ENCODE measurements at regions of chr11 and their contacts with region 1.

Region 1: DNA sequence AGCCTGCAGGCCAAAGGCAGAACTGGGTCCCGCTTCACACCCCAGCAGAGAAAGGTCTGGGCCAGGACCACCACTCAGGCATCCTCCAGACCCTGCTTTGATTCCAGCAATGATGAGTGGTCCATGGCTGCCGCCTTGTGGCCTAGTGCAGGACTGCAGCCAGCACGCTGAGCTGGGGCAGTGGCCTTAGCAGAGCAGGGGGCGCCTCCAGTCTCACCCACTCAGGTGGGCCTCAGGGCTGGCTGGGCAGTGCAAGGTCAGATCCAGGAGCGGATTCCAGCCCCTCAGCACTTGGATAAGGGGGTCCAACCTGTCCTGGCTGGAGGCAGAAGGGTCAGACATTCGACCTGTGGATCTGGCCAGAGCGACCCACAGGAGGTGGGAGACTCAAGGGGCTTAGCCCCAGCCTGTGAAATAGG is 9.6 kb upstream of the PDE2A start:
- DNase-seq: peak; percentile 46
- H3K4me3 Mint-ChIP-seq: no peak overlapping the region
- H3K27ac Mint-ChIP-seq: no peak overlapping the region
- H3K4me1 Mint-ChIP-seq: no peaks in the 10 kb centered on the region
- H3K27me3 Mint-ChIP-seq: peaks cover 14% of the 10 kb centered on the region
- CTCF ChIP-seq: peak; percentile 92

Region 2: GRCh38 chr11:72483412-72484186 is 200.2 kb before region 1 on chr11:
- CTCF ChIA-PET with region 1: interaction called, 12 read pairs
- POLR2A ChIA-PET with region 1: interaction called, 7 read pairs
- intact Hi-C with region 1: no loop called
- DNase-seq: peak; percentile 44
- H3K4me3 Mint-ChIP-seq: no peak overlapping the region
- H3K27ac Mint-ChIP-seq: peak overlapping the region; percentile 91
- H3K4me1 Mint-ChIP-seq: peaks cover 15% of the 10 kb centered on the region
- H3K27me3 Mint-ChIP-seq: no peaks in the 10 kb centered on the region
- CTCF ChIP-seq: no peak

Region 3: DNA sequence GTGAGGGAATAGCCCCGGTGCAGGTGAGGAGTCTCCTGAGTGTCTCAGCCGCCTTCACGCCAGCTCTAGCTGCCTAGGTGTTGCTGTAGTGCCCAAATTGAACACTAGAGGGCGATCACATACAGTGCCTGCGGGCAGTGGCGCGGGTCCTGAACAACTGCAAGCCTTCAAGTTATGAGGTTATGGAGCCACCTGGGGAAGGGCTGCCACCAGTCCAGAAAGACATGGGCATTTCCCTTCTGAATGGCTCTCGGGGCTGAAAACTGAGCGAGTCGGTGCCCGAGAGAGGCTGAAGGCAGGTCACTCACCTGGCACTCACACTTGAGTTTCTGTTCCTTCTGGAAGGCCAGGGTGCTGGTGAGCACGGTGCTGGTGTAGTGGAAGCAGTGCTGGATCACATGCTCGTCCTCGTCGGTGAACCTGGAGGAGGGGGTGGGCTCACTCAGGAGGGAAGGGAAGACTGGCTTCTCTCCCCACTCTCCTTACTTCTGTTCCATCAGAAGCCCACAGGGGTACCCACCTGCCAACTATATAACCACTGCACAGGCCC is 98.0 kb before region 1 on chr11:
- CTCF ChIA-PET with region 1: interaction called, 24 read pairs
- POLR2A ChIA-PET with region 1: interaction called, 3 read pairs
- intact Hi-C with region 1: loop called (anchors 1 kb)
- DNase-seq: peak; percentile 71
- H3K4me3 Mint-ChIP-seq: no peak overlapping the region
- H3K27ac Mint-ChIP-seq: no peak overlapping the region
- H3K4me1 Mint-ChIP-seq: peaks cover 3% of the 10 kb centered on the region
- H3K27me3 Mint-ChIP-seq: peaks cover 37% of the 10 kb centered on the region
- CTCF ChIP-seq: peak; percentile 77

Region 4: GRCh38 chr11:72700026-72700610 is 16.3 kb after region 1 on chr11:
- CTCF ChIA-PET with region 1: interaction called, 12 read pairs
- POLR2A ChIA-PET with region 1: no interaction called
- intact Hi-C with region 1: no loop called
- DNase-seq: peak; percentile 66
- H3K4me3 Mint-ChIP-seq: no peak overlapping the region
- H3K27ac Mint-ChIP-seq: no peak overlapping the region
- H3K4me1 Mint-ChIP-seq: no peaks in the 10 kb centered on the region
- H3K27me3 Mint-ChIP-seq: no peaks in the 10 kb centered on the region
- CTCF ChIP-seq: no peak

Region 5: DNA sequence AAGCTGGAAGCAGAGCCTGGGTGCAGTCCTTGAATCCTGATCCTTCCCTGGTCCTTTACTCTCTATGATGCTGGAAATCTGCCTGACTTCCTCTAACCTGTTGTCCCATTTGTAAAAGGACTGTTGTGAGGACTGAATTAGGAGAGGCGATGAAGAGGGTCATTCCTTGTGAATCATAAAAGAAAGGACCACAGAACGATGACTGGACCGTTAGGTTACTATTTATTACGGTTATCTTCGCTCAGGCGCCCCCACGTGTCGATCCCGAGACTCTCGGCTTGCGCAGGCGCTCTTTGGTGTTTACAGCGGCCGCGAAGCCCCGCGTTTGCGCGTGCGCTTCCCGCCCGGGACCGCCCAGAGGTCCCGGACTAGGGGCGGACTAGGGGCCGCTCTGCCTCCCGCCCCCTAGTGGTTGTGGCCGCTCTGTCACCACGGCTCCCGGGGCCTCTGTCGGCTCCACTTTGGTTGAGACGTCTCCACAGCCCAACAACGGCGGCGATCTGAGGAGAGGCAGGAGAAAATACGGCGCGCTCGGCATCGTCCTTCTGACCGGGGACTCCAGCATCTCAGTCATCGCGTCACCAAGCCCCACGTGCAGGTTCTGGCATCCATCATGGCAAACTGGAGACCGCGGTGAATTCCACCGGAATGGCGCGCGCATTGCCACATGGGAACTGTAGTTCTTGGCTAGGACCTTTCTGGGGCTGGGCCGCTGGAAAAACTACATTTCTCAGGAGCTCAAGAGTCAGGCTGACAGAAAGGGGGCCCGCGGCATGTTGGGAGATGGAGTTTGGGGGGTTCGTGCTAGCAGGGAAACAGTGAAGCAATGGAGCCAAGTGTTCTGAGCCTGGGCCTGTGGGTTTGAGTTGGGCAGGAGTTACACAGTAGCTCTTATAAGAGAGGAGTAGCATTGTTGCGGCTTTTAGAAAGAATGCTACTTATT is 109.9 kb after region 1 on chr11 and contains the start of gene STARD10:
- CTCF ChIA-PET with region 1: no interaction called
- POLR2A ChIA-PET with region 1: no interaction called
- intact Hi-C with region 1: loop called (anchors 1 kb)
- DNase-seq: peak; percentile 96
- H3K4me3 Mint-ChIP-seq: peak within 1 kb of the TSS; percentile 89
- H3K27ac Mint-ChIP-seq: peak within 1 kb of the TSS; percentile 97
- H3K4me1 Mint-ChIP-seq: peaks cover 17% of the 10 kb centered on the region
- H3K27me3 Mint-ChIP-seq: no peaks in the 10 kb centered on the region
- CTCF ChIP-seq: peak; percentile 93
- total RNA-seq, gene STARD10: 10.6 and 16.9 TPM in 2 replicates

Region 6: GRCh38 chr11:72848846-72849466 is 165.2 kb after region 1 on chr11:
- CTCF ChIA-PET with region 1: no interaction called
- POLR2A ChIA-PET with region 1: no interaction called
- intact Hi-C with region 1: loop called (anchors 1 kb)
- DNase-seq: peak; percentile 50
- H3K4me3 Mint-ChIP-seq: no peak overlapping the region
- H3K27ac Mint-ChIP-seq: no peak overlapping the region
- H3K4me1 Mint-ChIP-seq: no peaks in the 10 kb centered on the region
- H3K27me3 Mint-ChIP-seq: no peaks in the 10 kb centered on the region
- CTCF ChIP-seq: peak; percentile 53